ENCODE measurements at regions of chr3 and their contacts with region 1.

Region 1: GRCh38 chr3:36993326-36994283 is at the start of gene MLH1:
- DNase-seq: peak; percentile 97
- ATAC-seq: peak; percentile 96
- total RNA-seq, gene MLH1: 49.3 TPM

Region 2: DNA sequence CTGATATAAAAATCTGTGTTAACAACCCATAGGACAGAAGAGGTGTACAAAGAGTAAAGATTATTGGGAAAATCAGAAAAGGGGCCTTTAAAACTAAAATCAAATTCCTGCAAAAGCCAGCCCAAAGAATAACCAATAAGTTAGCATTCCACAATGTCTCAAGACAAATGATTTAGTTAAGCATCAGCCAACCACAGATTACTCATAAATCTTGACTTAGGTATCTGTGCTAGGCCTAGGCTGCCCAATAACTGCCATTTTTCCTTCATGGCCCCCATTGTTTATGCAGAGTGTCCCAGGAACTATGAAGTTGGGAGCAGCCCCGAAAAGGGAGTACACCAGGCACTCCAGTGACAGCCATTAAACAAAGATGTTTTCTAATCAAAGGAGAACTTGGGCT is 56.1 kb before region 1 on chr3:
- intact Hi-C with region 1: no loop called
- DNase-seq: no peak
- ATAC-seq: no peak

Region 3: DNA sequence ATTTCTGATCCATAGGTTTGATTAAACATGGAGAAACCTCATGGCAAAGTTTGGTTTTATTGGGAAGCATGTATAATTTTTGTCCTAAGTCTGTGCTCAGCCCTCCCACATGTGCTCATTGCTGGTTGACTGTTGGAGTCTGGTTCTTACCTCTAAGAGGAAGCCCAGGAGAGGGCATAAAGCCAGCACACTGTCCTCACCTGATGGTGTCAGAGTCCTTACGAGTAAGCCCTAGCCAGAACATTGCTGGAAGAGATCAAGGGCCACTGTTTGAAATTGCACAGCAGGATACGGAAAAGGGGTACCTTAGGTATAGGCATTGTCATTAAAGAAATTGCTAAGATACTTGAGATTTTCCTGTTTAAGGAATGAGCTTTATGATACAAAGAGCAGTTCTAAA is 21.0 kb after region 1 on chr3:
- intact Hi-C with region 1: loop called (anchors 1 kb)
- DNase-seq: peak; percentile 69
- ATAC-seq: peak; percentile 80

Region 4: DNA sequence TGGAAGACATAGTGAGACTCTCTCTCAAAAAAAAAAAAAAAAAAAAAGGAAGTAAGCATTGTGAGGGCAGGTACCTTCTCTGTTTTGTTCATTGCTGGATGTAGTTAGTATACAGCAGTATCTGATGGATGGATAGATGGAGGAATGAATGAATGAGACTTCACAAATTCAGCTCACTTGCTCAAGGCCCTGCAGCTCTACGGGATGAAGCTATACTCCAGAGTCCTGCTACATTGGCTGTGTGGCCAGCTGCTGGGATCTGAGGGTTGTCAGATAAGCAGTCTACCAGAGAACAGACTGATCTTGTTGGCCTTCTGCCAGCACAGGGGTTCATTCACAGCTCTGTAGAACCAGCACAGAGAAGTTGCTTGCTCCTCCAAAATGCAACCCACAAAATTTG is 34.7 kb after region 1 on chr3:
- intact Hi-C with region 1: no loop called
- DNase-seq: peak; percentile 74
- ATAC-seq: peak; percentile 89

Region 5: DNA sequence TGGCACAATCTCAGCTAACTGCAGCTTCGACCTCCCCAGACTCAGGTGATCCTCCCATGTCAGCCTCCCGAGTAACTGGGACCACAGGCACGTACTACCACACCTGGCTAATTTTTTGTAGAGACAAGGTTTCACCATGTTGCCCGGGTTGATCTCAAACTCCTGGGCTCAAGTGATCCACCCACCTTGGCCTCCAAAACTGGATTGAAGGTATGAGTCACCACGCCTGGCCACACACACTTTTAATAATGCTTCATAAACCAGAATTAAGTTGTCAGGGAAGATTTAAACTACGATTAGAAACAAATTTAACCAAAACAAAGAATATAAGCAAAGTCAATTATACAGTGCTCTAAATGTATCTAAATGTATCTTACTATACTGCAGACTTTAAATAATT is 93.3 kb after region 1 on chr3:
- intact Hi-C with region 1: no loop called
- DNase-seq: no peak
- ATAC-seq: no peak

Region 6: DNA sequence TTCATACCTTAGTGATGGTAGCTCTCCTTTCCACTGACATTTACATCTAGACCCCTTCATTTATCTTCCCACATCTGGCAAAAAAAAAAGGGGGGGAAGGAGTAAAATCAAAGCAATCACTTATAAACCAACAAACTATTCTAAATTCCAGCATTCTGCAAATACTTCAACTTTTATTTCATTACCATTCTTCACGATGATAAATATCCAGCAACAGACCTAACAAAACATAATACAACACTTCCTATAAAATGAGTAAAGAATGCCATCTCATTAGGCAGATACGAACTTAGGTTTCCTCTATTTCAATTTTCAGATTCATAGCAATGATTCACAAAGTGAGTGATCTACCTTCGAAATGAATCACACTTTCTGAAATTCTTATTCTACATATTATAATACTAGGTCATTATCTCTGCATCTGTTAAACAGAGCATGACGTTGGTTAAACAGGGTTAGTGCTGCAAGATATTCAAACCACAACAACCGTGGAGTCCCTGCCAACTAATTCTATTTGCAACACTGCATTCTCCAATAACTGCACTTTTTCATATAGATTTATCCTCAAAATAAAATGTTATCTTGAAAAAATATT is 181.0 kb after region 1 on chr3 and contains the start of gene LRRFIP2:
- intact Hi-C with region 1: no loop called
- DNase-seq: no peak
- ATAC-seq: no peak
- total RNA-seq, gene LRRFIP2: 146 TPM